ENCODE measurements at regions of chr11 and their contacts with region 1.

Region 1: DNA sequence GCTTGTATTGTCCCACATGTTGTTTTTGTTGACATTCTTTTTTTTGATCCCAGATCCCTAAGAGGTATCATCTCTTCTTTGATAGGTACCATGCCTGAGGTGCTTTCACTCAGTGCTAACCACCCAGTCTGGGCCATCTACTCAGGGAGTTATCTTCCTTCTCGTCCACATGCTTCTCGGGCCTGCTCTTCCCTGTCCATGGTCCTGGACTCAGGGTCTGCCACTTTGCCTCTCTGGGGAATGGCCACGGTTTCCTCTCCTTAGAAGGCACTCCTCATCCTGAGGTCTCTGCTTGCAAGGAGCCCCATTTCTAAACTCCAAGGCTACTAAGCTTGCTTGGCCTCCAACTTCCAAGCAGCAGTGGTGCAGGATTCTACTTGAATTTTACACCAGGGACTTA is 227.0 kb upstream of the NCAM1 start:
- DNase-seq: no peak
- H3K4me3 ChIP-seq: no peak overlapping the region
- H3K27ac ChIP-seq: peak overlapping the region in 9 of 59 donors; percentile 10 to 98 (median 91)
- H3K27me3 ChIP-seq: no peaks in the 10 kb centered on the region
- CTCF ChIP-seq: no peak

Region 2: DNA sequence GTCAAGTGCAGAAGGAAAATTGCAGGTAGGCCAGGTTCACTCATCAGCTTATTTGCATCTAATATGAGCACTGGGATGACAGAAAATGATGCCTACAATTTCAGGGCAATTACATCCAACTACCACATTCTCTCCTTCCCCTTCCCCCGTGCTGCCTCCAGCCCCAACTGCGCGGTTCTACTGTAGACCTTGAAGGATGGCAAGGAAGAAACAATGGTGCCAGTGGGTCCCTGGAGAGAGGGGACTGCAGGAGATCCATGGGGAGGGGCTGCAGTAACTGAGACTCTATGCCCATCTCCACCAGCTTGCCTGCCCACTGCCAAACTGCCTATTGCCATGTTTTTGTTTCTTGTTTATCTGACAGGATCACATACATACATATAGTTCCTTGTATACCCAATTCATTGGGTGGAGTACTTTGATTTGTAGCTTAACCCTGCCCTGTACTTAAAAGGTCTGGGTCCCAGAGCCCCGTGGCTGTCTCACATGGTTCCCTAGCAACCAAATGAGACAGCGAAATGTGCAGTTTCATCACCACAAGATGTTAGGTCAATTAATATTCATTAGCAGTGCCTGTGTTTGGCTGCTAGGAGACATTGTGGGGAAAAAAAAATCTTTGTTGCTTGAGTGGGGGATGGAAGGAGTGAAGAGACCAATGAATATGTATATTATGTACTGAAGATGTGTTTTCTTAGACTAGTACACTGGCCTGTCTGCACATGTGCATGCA is 220.0 kb before region 1 on chr11:
- intact Hi-C with region 1: no loop called
- DNase-seq: peak in 3 of 10 donors; percentile 34 to 45 (median 37)
- H3K4me3 ChIP-seq: peak overlapping the region in 8 of 59 donors; percentile 2 to 31 (median 8)
- H3K27ac ChIP-seq: peak overlapping the region in 35 of 59 donors; percentile 2 to 75 (median 49)
- H3K27me3 ChIP-seq: no peaks in the 10 kb centered on the region
- CTCF ChIP-seq: peak in 2 of 56 donors; percentile 8 to 17

Region 3: DNA sequence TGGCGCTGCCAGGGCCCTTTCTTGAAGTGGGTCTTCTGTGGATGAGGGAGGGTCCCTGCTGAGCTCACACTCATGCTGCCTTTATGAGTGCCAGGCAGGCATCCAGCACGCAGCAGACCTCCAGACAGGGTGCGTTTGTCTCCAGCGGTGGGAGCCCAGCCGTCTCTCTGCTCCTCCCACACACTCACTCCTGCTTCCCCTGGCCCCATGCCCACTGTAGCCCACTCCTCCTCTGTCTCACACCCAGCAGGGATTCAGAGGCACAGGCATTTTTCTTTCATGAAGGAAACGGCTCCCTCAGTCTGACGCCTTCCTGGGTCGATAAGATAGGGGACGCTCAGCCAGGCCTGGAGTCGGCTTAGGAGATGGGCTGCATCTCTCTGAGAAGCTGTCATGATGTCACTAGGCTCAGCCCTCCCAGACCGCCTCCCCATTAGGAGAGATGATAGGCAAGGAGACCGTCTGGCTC is 43.1 kb after region 1 on chr11:
- intact Hi-C with region 1: loop called in 1 of 2 experiments (anchors 2 kb)
- DNase-seq: no peak
- H3K4me3 ChIP-seq: no peak overlapping the region
- H3K27ac ChIP-seq: peak overlapping the region in 48 of 59 donors; percentile 1 to 83 (median 62)
- H3K27me3 ChIP-seq: no peaks in the 10 kb centered on the region
- CTCF ChIP-seq: no peak

Measured in dorsolateral prefrontal cortex (tissue), 120 donors.